Mammary epithelial cell (primary cell): ENCODE measurements at regions of chr6 and their contacts with region 1.

Region 1: DNA sequence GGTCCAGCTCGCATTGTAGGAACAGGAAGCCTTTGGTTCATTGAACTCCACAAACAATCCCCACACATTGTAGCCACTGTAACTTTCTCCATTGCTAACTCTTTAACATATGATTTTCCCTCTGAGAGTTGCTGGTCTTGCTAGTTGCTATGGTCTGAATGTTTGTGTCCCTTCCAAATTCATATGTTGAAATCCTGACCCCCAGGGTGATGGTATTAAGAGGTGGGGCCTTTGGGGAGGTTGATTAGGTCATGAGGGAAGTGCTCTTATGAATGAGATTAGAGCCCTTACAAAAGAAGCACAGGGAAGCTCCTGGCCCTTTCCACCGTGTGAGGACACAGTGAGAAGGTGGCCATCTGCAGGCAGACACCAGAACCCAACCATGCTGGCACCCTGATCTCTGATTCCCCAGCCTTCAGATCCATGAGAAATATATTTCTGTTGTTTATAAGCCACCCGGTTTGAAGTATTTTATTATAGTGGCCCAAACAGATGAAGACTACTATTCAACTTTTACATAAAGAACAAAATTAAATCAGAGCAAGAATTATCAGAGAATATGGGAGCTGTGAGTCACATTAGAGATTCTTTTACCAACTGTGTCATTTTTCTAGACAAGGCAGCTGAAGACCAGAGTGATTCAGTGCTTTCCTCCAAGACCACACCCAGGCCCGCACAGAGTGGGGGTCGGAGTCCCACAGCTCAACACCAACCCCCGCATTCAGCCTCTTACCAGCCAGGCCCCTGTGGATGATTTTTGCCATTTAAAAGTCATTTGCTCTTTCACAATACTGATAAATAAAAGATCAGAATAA is 143.0 kb downstream of the SAMD5 start:
- DNase-seq: no peak
- H3K4me3 ChIP-seq: no peak overlapping the region
- H3K27ac ChIP-seq: no peak overlapping the region
- H3K4me1 ChIP-seq: no peaks in the 10 kb centered on the region
- H3K27me3 ChIP-seq: no peaks in the 10 kb centered on the region
- CTCF ChIP-seq: peak in 1 of 2 donors; percentile 45

Region 2: DNA sequence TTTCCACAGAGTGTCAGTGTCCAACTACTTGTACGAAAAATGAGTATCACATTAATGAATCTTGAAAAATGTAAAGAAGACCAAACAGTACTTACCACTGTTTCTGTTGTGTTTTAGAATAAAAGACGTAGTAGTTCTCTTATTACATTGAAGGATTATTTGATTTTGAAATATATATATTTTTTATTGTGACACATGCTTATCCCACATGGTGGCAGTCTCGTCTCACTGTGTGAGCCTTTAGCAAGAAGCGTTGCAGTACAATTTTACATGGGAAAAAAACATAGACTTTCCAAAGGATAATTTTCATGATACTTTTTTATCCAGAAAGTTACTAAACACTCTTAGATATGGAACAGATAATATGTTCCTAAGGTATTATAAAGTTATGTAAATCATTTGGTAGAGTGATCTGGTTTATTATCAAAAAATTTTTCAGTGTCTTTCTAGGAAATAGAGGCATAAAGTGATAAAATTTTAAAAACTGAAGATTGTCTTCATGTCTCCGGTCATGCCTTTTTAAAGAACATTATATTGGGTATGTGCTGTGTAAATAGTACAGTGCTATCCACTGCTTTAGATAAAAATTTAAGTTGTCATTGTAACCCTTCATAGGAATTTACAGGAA is 260.4 kb before region 1 on chr6:
- CTCF ChIA-PET with region 1: no interaction called
- dilution Hi-C with region 1: no loop called
- in situ Hi-C with region 1: no loop called
- intact Hi-C with region 1: loop called (anchors 5 kb)
- DNase-seq: no peak
- H3K4me3 ChIP-seq: no peak overlapping the region
- H3K27ac ChIP-seq: no peak overlapping the region
- H3K4me1 ChIP-seq: no peaks in the 10 kb centered on the region
- H3K27me3 ChIP-seq: no peaks in the 10 kb centered on the region
- CTCF ChIP-seq: peak; percentile 34 to 57

Region 3: GRCh38 chr6:147497472-147497871 is 154.0 kb before region 1 on chr6:
- CTCF ChIA-PET with region 1: no interaction called
- dilution Hi-C with region 1: no loop called
- in situ Hi-C with region 1: no loop called
- intact Hi-C with region 1: no loop called
- DNase-seq: no peak
- H3K4me3 ChIP-seq: no peak overlapping the region
- H3K27ac ChIP-seq: no peak overlapping the region
- H3K4me1 ChIP-seq: no peaks in the 10 kb centered on the region
- H3K27me3 ChIP-seq: no peaks in the 10 kb centered on the region
- CTCF ChIP-seq: no peak

Region 4: DNA sequence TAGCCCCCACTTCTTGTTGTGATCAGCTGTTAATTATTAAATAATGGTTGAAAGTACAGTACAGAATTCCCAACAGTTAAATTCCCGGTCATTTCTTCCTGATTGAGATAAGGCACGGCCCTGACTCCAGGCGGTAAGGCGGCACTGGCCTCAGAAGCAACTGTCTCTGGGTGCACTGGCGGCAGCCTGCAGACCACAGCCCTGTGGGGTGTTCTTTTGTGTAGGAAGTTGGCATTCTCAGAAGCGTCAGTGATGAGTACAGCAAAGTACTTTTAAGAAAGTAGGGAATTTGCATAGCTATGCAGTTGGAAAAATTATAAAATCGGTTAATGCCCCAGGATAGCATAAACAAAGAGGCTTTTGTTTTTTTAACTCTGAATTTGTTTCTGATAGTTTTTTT is 92.5 kb before region 1 on chr6:
- CTCF ChIA-PET with region 1: no interaction called
- dilution Hi-C with region 1: no loop called
- in situ Hi-C with region 1: no loop called
- intact Hi-C with region 1: no loop called
- DNase-seq: no peak
- H3K4me3 ChIP-seq: peak overlapping the region in 1 of 3 experiments; percentile 8
- H3K27ac ChIP-seq: no peak overlapping the region
- H3K4me1 ChIP-seq: peaks cover 32% of the 10 kb centered on the region
- H3K27me3 ChIP-seq: no peaks in the 10 kb centered on the region
- CTCF ChIP-seq: no peak